ENCODE measurements at regions of chr9 and their contacts with region 1.

Region 1: GRCh38 chr9:22079873-22080341 is 70.8 kb upstream of the CDKN2B start:
- DNase-seq: peak; percentile 91
- H3K4me3 Mint-ChIP-seq: peak overlapping the region; percentile 56
- H3K27ac Mint-ChIP-seq: peak overlapping the region; percentile 68
- H3K4me1 Mint-ChIP-seq: peaks cover 48% of the 10 kb centered on the region
- H3K27me3 Mint-ChIP-seq: peaks cover 49% of the 10 kb centered on the region

Region 2: DNA sequence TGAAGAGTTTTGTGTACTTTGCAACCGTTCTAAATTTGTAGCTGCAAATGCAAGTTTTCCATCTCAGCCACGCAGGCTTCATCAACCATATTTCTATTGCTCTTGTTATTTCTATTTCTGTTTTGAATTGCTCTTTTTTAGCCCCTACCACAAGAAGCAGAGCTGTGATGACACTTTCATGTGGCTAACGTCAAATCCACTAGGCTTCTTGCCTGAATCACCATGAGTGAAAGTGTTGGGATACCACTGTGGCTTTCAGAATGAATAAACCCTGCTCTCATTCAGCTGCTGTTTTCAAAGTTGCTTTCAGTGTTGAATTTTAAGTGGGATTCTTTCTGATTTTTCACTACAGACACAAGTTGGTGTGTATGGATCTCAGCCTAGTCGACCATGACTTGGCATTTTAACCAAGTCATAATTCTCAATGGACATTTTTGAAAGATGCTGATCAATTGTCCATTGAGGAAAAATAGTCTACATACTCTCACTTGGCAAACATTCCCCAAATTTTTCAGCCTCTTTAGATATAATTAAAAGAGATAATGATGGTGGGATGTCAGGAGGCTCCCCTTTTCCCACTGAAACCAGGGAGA is 318.5 kb before region 1 on chr9:
- intact Hi-C with region 1: loop called (anchors 1 kb)
- DNase-seq: peak; percentile 83
- H3K4me3 Mint-ChIP-seq: no peak overlapping the region
- H3K27ac Mint-ChIP-seq: no peak overlapping the region
- H3K4me1 Mint-ChIP-seq: peaks cover 13% of the 10 kb centered on the region
- H3K27me3 Mint-ChIP-seq: peaks cover 73% of the 10 kb centered on the region

Region 3: DNA sequence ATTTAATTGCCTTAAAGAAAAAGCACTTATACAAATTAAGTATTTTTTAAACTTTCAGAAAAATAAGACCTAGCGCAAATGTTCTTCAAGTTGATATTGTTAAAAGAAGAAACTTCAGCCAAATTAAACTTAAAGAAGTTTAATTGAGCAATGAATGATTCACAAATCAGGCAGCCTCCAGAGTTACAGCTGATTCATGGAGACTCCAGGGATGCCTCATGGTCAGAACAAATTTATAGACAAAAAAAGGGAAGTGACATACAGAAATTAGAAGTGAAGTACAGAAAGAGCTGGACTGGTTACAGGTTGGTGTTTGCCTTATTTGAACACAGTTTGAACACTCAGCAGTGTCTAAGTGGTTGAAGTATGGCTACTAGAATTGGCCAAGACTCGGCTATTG is 146.0 kb before region 1 on chr9:
- intact Hi-C with region 1: no loop called
- DNase-seq: no peak
- H3K4me3 Mint-ChIP-seq: no peak overlapping the region
- H3K27ac Mint-ChIP-seq: no peak overlapping the region
- H3K4me1 Mint-ChIP-seq: no peaks in the 10 kb centered on the region
- H3K27me3 Mint-ChIP-seq: no peaks in the 10 kb centered on the region

Region 4: GRCh38 chr9:22008736-22009562 is 71.0 kb before region 1 on chr9 and contains the start of gene CDKN2B:
- intact Hi-C with region 1: loop called (anchors 5 kb)
- DNase-seq: peak; percentile 94
- H3K4me3 Mint-ChIP-seq: peak within 1 kb of the TSS; percentile 82
- H3K27ac Mint-ChIP-seq: no peak within 1 kb of the TSS
- H3K4me1 Mint-ChIP-seq: peaks cover 24% of the 10 kb centered on the region
- H3K27me3 Mint-ChIP-seq: peaks cover 73% of the 10 kb centered on the region
- total RNA-seq, gene CDKN2B: 0.21 and 0.33 TPM in 2 replicates

Region 5: GRCh38 chr9:22052376-22052945 is 27.4 kb before region 1 on chr9:
- intact Hi-C with region 1: loop called (anchors 1 kb)
- DNase-seq: peak; percentile 79
- H3K4me3 Mint-ChIP-seq: peak overlapping the region; percentile 42
- H3K27ac Mint-ChIP-seq: peak overlapping the region; percentile 62
- H3K4me1 Mint-ChIP-seq: peaks cover 32% of the 10 kb centered on the region
- H3K27me3 Mint-ChIP-seq: peaks cover 20% of the 10 kb centered on the region

Region 6: GRCh38 chr9:22105005-22105722 is 25.3 kb after region 1 on chr9:
- intact Hi-C with region 1: loop called (anchors 1 kb)
- DNase-seq: no peak
- H3K4me3 Mint-ChIP-seq: no peak overlapping the region
- H3K27ac Mint-ChIP-seq: no peak overlapping the region
- H3K4me1 Mint-ChIP-seq: peaks cover 33% of the 10 kb centered on the region
- H3K27me3 Mint-ChIP-seq: peaks cover 44% of the 10 kb centered on the region